ENCODE measurements at regions of chr7 and their contacts with region 1.

Region 1: GRCh38 chr7:23529262-23529859 is 2.4 kb downstream of the TRA2A start:
- DNase-seq: no peak
- H3K4me3 Mint-ChIP-seq: peak overlapping the region; percentile 79
- H3K27ac Mint-ChIP-seq: peak overlapping the region; percentile 93
- H3K4me1 Mint-ChIP-seq: peaks cover 58% of the 10 kb centered on the region
- H3K27me3 Mint-ChIP-seq: no peaks in the 10 kb centered on the region
- CTCF ChIP-seq: no peak

Region 2: GRCh38 chr7:23476286-23477156 is 52.8 kb before region 1 on chr7:
- CTCF ChIA-PET with region 1: no interaction called
- intact Hi-C with region 1: loop called (anchors 2 kb)
- DNase-seq: no peak
- H3K4me3 Mint-ChIP-seq: peak overlapping the region; percentile 69
- H3K27ac Mint-ChIP-seq: peak overlapping the region; percentile 63
- H3K4me1 Mint-ChIP-seq: peaks cover 19% of the 10 kb centered on the region
- H3K27me3 Mint-ChIP-seq: no peaks in the 10 kb centered on the region
- CTCF ChIP-seq: no peak

Measured in Calu3 (cell line).